GM12878 (cell line): ENCODE measurements at regions of chr11 and their contacts with region 1.

Region 1: DNA sequence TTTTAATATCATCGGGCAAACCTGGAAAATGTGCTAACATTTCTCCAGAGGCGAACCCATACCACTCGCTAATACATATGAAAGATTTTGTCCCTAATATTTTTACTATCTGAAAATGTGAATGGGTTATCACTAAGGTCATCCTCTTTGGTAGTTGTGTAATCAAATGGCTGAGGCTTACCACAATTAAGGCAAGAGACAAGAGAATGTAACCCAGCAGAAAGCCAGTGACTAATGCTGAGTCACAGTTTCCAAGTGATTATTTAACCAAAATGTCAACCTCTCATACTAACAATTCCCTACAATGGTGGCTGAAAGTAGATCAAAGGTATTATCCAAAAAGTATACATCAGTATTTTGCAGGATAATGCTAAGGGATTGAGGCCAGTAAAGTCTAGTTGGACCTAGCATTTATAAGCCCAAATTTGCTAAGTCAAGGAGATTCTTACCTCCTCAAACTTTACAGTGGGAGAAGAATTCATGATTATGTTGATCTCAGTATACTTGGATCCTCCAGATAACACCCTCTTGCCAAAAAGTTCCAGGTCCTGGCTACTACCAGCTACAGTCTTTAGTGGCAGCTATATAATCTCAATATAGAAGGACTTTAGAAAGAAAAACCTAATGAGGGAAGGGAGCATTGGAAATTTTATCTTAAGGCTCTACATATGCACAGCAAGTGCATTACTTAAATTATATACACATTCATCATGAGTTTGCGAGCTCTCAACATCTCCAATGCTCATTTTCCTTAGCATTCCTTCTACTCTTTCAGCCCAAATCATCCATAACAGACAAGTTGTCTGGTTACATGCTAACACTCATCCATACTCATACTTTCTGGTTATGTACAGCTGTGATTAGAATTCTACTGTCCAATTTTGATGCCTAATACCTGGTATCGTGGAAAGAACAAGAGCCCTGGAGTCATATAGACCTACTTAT is 25.4 kb downstream of the SIK3 start:
- DNase-seq: peak; percentile 45
- ATAC-seq: peak; percentile 70
- H3K4me3 ChIP-seq: no peak overlapping the region
- H3K27ac ChIP-seq: no peak overlapping the region
- H3K4me1 ChIP-seq: peaks cover 38% of the 10 kb centered on the region
- H3K27me3 ChIP-seq: no peaks in the 10 kb centered on the region
- CTCF ChIP-seq: no peak
- EP300 ChIP-seq: no peak
- POLR2A ChIP-seq: no peak
- RAD21 ChIP-seq: no peak

Region 2: GRCh38 chr11:117039900-117040299 is 32.9 kb before region 1 on chr11:
- CTCF ChIA-PET with region 1: no interaction called
- POLR2A ChIA-PET with region 1: no interaction called
- RAD21 ChIA-PET with region 1: interaction called, 3 read pairs
- SMC1A ChIA-PET with region 1: interaction called, 13 read pairs
- in situ Hi-C with region 1: no loop called
- intact Hi-C with region 1: no loop called
- DNase-seq: no peak
- ATAC-seq: peak; percentile 72
- H3K4me3 ChIP-seq: no peak overlapping the region
- H3K27ac ChIP-seq: no peak overlapping the region
- H3K4me1 ChIP-seq: peaks cover 16% of the 10 kb centered on the region
- H3K27me3 ChIP-seq: no peaks in the 10 kb centered on the region
- CTCF ChIP-seq: no peak
- EP300 ChIP-seq: no peak
- POLR2A ChIP-seq: no peak
- RAD21 ChIP-seq: no peak

Region 3: GRCh38 chr11:117058761-117059261 is 14.0 kb before region 1 on chr11:
- CTCF ChIA-PET with region 1: interaction called, 7 read pairs
- POLR2A ChIA-PET with region 1: interaction called, 5 read pairs
- RAD21 ChIA-PET with region 1: interaction called, 13 read pairs
- SMC1A ChIA-PET with region 1: interaction called, 59 read pairs
- in situ Hi-C with region 1: no loop called
- intact Hi-C with region 1: loop called (anchors 1 kb)
- DNase-seq: no peak
- ATAC-seq: no peak
- H3K4me3 ChIP-seq: no peak overlapping the region
- H3K27ac ChIP-seq: no peak overlapping the region
- H3K4me1 ChIP-seq: peaks cover 32% of the 10 kb centered on the region
- H3K27me3 ChIP-seq: no peaks in the 10 kb centered on the region
- CTCF ChIP-seq: no peak
- EP300 ChIP-seq: no peak
- POLR2A ChIP-seq: no peak
- RAD21 ChIP-seq: no peak

Region 4: GRCh38 chr11:117089685-117090084 is 16.9 kb after region 1 on chr11:
- CTCF ChIA-PET with region 1: interaction called, 10 read pairs
- POLR2A ChIA-PET with region 1: interaction called, 13 read pairs
- RAD21 ChIA-PET with region 1: interaction called, 22 read pairs
- SMC1A ChIA-PET with region 1: interaction called, 73 read pairs
- in situ Hi-C with region 1: no loop called
- intact Hi-C with region 1: loop called (anchors 2 kb)
- DNase-seq: no peak
- ATAC-seq: peak; percentile 20
- H3K4me3 ChIP-seq: peak overlapping the region; percentile 48; the same call in 1 of the 2 replicates
- H3K27ac ChIP-seq: no peak overlapping the region
- H3K4me1 ChIP-seq: peaks cover 41% of the 10 kb centered on the region
- H3K27me3 ChIP-seq: no peaks in the 10 kb centered on the region
- CTCF ChIP-seq: no peak
- EP300 ChIP-seq: no peak
- POLR2A ChIP-seq: no peak
- RAD21 ChIP-seq: no peak

Region 5: DNA sequence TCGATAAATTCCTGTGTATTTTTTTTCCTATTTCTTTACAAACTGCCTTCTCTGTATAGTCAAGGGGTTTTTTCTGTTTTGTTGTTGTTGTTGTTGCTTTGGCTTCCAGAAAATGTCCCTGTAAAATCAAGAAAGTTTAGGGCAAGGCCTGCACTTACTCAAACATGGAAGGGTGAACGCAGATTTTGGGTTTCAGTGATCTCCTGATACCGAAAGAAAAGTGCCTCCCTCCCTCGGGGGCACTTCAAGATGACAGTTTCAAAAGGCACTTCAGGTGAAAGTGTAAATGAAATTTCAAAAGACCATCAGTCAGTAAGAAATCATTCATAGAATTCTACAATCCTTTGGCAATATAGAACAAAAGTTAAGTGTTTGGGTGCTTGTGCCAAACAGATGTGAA is 960.7 kb after region 1 on chr11:
- CTCF ChIA-PET with region 1: no interaction called
- POLR2A ChIA-PET with region 1: no interaction called
- RAD21 ChIA-PET with region 1: no interaction called
- SMC1A ChIA-PET with region 1: no interaction called
- in situ Hi-C with region 1: no loop called
- intact Hi-C with region 1: no loop called
- DNase-seq: no peak
- ATAC-seq: peak; percentile 97
- H3K4me3 ChIP-seq: no peak overlapping the region
- H3K27ac ChIP-seq: no peak overlapping the region
- H3K4me1 ChIP-seq: peaks cover 12% of the 10 kb centered on the region
- H3K27me3 ChIP-seq: no peaks in the 10 kb centered on the region
- CTCF ChIP-seq: no peak
- EP300 ChIP-seq: peak in 1 of 2 experiments; percentile 50; a peak in 1 of 4 replicates
- POLR2A ChIP-seq: no peak
- RAD21 ChIP-seq: no peak